Body of pancreas (tissue), 4 donors: ENCODE measurements at regions of chr11 and their contacts with region 1.

Region 1: GRCh38 chr11:924406-925157 is 1.1 kb upstream of the AP2A2 start:
- DNase-seq: no peak
- ATAC-seq: no peak
- H3K4me3 ChIP-seq: no peak overlapping the region
- H3K27ac ChIP-seq: peak overlapping the region in 1 of 4 donors; percentile 89
- H3K4me1 ChIP-seq: peaks cover 25% of the 10 kb centered on the region
- H3K27me3 ChIP-seq: no peaks in the 10 kb centered on the region
- CTCF ChIP-seq: no peak
- POLR2A ChIP-seq: no peak

Region 2: DNA sequence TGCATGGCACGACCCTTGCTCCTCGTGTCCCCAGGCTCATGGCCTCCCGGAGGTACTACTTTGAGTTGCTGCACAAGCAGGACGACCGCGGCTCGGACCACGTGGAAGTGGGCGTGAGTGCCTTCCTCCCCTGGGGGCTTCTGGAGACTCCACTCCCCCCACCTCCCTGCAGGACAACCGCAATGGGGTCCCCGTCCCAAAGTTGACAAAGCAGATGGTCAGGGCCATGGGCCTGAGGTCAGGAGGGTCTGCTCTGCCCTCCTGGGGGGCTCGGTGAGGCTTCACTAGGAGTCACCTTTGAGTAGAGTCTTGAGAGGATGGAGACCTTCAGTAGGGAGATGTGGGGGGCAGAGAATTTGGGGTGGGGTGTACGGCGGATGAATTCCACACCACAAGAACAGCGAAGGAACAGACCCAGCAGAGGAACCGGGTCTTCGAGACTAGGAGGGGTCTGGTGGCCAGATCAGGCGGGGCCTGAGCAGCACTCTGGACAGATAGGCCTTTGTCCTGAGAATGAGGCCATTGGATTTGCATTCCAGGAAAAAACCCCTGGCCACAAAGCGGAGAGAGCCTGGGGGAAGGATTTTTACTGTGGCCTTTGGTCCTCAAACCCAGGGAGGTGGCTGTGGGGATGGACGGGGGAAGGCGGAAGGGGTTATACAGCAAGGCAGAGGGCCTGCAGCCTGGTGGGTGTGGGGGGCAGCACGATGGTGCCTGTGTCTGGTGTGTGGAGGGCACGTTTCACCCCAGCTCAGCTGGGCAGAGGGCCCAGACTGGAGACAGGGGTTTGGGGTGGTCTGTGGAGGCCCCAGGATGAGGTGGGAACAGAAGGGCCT is 550.6 kb before region 1 on chr11:
- intact Hi-C with region 1: no loop called
- DNase-seq: no peak
- ATAC-seq: no peak
- H3K4me3 ChIP-seq: no peak overlapping the region
- H3K27ac ChIP-seq: no peak overlapping the region
- H3K4me1 ChIP-seq: no peaks in the 10 kb centered on the region
- H3K27me3 ChIP-seq: no peaks in the 10 kb centered on the region
- CTCF ChIP-seq: no peak
- POLR2A ChIP-seq: no peak

Region 3: DNA sequence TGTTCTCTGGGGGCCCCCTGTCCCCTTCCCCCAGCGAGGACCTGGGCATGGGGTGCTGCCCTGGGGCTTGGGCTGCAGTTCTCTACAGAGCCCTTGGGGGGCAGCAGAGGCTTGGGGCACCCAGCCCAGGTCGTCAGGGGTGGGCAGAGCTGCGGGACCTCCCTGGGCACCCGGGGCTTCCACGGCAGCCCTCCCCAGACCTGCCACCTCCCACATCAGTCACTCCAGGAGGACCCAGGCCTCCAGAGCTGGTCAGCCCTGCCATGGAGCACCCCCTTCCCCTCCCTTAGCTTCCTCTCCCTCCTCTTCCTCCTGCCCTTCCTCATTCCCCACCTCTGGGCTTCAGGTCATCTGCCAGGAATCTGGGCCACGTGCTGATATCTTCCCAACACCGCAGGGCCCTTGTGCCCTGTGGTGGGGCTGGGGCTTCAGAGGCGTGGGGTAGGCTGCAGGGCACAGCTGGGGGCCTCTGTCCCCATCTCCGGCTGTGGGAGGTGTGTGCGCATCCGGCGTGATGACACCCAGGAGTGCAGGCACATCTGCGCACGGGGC is 76.1 kb before region 1 on chr11:
- intact Hi-C with region 1: loop called (anchors 5 kb)
- DNase-seq: peak in 3 of 4 donors; percentile 60 to 64 (median 64)
- ATAC-seq: peak; percentile 15
- H3K4me3 ChIP-seq: no peak overlapping the region
- H3K27ac ChIP-seq: no peak overlapping the region
- H3K4me1 ChIP-seq: peaks cover 56% of the 10 kb centered on the region
- H3K27me3 ChIP-seq: peaks cover 0 to 6% of the 10 kb centered on the region in 2 donors
- CTCF ChIP-seq: peak; percentile 80 to 97 (median 87)
- POLR2A ChIP-seq: no peak

Region 4: DNA sequence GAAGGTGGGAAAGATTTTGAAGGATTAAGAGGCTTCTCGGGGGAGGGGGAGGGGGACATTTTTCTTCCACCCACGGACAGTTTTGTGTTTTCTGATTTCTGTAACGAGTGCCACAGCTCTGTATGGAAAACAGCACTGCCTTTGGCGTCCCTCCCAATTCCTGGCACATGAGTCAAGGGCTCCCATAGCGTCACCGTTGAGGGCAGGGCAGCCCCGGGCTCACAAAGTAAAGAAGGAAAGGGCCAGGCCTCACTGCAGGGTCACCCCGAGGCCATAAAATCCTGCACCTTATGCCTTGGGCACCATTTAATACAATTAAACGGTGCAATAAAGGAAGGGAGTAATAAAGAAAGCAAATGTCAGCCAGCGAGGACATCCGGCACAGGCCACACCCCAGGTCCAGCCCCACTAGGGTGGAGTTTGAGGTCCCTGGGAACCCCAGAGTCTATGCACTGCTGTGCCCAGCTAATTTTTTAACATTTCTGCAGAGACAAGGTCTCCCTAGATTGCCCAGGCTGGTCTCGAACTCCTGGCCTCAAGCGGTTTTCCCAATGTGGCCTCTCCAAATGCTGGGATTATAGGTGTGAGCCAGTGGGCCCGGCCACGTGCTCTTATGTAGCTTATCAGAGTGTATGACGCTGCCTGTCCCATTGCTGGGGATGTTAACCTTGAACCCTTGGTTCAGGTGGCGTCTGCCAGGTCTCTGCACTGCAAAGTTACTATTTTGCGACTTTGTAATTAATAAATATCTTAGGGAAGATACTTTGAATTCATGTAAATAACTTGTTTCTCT is 136.4 kb after region 1 on chr11:
- intact Hi-C with region 1: no loop called
- DNase-seq: peak in 3 of 4 donors; percentile 18 to 53 (median 35)
- ATAC-seq: peak; percentile 29
- H3K4me3 ChIP-seq: no peak overlapping the region
- H3K27ac ChIP-seq: no peak overlapping the region
- H3K4me1 ChIP-seq: no peaks in the 10 kb centered on the region
- H3K27me3 ChIP-seq: no peaks in the 10 kb centered on the region
- CTCF ChIP-seq: no peak
- POLR2A ChIP-seq: no peak